ENCODE measurements at regions of chr20 and their contacts with region 1.

Region 1: DNA sequence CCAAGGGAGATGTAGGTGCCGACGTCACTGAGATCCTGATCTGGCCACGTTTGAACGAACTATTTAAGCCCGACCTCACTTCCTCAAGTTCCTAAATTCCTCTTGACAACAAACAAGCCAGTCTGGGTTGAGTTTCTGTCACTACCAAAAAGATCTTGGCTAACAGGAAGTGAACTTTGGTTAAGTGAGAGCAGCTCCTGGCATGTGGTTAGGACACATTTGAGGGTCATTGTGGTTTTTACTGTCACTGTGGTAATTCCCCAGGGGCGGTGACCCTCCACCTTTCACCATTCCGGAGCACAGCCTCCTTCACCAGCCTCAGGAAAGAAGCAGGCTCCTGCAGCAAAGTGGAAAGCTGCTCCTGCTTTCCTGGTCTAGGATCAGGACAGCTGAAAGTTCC is 43.1 kb upstream of the ZNF831 start:
- DNase-seq: peak in 6 of 14 experiments; percentile 23 to 79 (median 50)
- ATAC-seq: no peak
- H3K4me3 ChIP-seq: no peak overlapping the region
- H3K4me3 Mint-ChIP-seq: peak overlapping the region; percentile 72
- H3K27ac ChIP-seq: peak overlapping the region; percentile 77 to 85
- H3K27ac Mint-ChIP-seq: peak overlapping the region; percentile 99
- H3K4me1 ChIP-seq: peaks cover 85% of the 10 kb centered on the region
- H3K4me1 Mint-ChIP-seq: peaks cover 89% of the 10 kb centered on the region
- H3K27me3 ChIP-seq: no peaks in the 10 kb centered on the region
- H3K27me3 Mint-ChIP-seq: no peaks in the 10 kb centered on the region
- CTCF ChIP-seq: no peak

Region 2: DNA sequence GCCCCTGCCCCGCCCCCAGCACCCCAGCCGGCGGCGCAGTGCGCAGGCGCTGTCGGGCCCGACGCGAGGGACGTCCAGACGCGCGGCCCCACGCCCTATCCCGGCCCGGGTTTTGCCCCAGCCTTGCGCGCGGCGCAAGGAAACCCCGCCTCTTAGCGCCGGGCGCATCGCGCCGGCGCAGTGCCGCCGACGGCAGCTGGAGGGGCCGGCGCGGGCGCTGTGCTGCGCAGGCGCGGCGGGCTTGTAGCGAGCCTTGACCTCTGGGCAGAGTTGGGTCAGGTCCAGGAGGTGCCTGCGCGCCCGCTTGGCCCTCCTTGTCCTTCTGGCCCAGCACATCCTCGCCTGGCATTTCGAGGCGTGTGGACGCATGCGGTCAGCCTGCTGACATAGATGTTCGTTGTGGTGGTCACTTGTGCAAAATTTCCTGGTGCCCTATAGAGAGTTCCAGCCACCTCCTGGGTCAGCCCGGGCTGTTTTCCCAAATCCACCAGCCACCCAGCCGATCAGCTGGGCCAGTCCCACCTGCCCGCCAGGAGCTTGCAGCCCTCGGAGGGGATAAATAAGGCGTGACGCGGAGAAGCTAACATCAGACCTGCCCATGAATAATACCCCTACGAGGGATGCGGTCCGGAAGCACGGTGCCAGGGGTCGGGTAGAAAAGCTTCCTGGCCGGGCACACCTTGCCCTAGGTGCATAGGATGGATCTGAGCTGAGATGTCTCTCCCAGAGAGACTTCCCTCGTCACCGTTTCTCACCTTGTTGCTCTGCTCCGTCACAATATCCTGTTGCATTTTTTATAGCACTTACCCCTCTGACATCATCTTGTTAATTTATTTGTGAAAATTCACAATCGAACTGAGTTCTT is 77.5 kb before region 1 on chr20:
- CTCF ChIA-PET with region 1: no interaction called
- POLR2A ChIA-PET with region 1: interaction called, 10 read pairs
- intact Hi-C with region 1: no loop called
- DNase-seq: peak; percentile 87 to 97 (median 94)
- ATAC-seq: peak; percentile 94
- H3K4me3 ChIP-seq: peak overlapping the region; percentile 85
- H3K4me3 Mint-ChIP-seq: peak overlapping the region; percentile 92
- H3K27ac ChIP-seq: peak overlapping the region; percentile 67 to 77
- H3K27ac Mint-ChIP-seq: peak overlapping the region; percentile 91
- H3K4me1 ChIP-seq: peaks cover 41% of the 10 kb centered on the region
- H3K4me1 Mint-ChIP-seq: peaks cover 48% of the 10 kb centered on the region
- H3K27me3 ChIP-seq: no peaks in the 10 kb centered on the region
- H3K27me3 Mint-ChIP-seq: no peaks in the 10 kb centered on the region
- CTCF ChIP-seq: no peak

Region 3: DNA sequence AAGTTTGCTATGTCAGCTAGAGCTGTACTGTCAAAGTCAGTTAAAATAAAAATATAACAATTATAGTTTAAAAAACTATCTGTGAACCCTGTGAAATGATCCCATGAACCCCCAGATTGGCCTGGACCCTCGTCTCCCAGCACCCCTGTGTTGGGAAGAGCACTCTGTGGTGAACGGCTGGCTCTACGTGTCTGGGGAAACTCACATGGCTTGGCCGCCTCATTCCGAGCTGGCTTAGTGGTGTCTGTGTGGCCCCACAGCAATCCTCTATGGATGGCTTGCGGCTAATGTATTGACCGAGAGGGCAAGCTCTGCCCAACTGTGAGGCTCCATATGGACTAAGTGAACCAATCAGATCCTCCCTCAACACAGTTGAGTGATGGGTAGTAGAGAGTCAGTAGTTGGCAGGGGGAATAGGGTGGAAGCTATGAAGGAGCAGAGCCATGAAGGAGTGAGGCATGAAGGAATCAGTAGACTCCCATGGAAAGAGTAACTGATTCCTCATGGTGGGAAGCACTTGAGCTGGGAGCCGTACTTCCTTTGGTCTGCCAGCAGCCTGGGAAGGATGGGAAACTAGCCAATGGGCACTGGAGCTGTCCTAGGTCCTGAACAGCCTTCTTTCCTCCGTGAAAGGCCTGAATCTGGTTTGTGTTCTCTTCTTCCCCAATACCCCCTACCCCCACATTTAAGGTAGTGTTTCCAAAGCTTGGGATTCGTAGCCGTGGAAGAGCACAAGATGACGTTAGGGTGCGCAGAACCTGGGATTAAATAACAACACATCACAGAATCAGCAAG is 21.5 kb after region 1 on chr20:
- CTCF ChIA-PET with region 1: interaction called, 13 read pairs
- POLR2A ChIA-PET with region 1: interaction called, 203 read pairs
- intact Hi-C with region 1: loop called in 1 of 2 experiments (anchors 2 kb)
- DNase-seq: peak in 2 of 14 experiments; percentile 25 to 33
- ATAC-seq: no peak
- H3K4me3 ChIP-seq: no peak overlapping the region
- H3K4me3 Mint-ChIP-seq: peak overlapping the region; percentile 7
- H3K27ac ChIP-seq: no peak overlapping the region
- H3K27ac Mint-ChIP-seq: no peak overlapping the region
- H3K4me1 ChIP-seq: peaks cover 38% of the 10 kb centered on the region
- H3K4me1 Mint-ChIP-seq: peaks cover 58% of the 10 kb centered on the region
- H3K27me3 ChIP-seq: no peaks in the 10 kb centered on the region
- H3K27me3 Mint-ChIP-seq: no peaks in the 10 kb centered on the region
- CTCF ChIP-seq: no peak

Region 4: GRCh38 chr20:59177261-59178250 is 57.1 kb after region 1 on chr20:
- CTCF ChIA-PET with region 1: interaction called, 5 read pairs
- POLR2A ChIA-PET with region 1: interaction called, 30 read pairs
- intact Hi-C with region 1: no loop called
- DNase-seq: peak in 4 of 14 experiments; percentile 43 to 82 (median 60)
- ATAC-seq: peak; percentile 68
- H3K4me3 ChIP-seq: peak overlapping the region; percentile 9
- H3K4me3 Mint-ChIP-seq: peak overlapping the region; percentile 35
- H3K27ac ChIP-seq: peak overlapping the region; percentile 33 to 70
- H3K27ac Mint-ChIP-seq: peak overlapping the region; percentile 82
- H3K4me1 ChIP-seq: peaks cover 73% of the 10 kb centered on the region
- H3K4me1 Mint-ChIP-seq: peaks cover 92% of the 10 kb centered on the region
- H3K27me3 ChIP-seq: no peaks in the 10 kb centered on the region
- H3K27me3 Mint-ChIP-seq: no peaks in the 10 kb centered on the region
- CTCF ChIP-seq: no peak

Region 5: DNA sequence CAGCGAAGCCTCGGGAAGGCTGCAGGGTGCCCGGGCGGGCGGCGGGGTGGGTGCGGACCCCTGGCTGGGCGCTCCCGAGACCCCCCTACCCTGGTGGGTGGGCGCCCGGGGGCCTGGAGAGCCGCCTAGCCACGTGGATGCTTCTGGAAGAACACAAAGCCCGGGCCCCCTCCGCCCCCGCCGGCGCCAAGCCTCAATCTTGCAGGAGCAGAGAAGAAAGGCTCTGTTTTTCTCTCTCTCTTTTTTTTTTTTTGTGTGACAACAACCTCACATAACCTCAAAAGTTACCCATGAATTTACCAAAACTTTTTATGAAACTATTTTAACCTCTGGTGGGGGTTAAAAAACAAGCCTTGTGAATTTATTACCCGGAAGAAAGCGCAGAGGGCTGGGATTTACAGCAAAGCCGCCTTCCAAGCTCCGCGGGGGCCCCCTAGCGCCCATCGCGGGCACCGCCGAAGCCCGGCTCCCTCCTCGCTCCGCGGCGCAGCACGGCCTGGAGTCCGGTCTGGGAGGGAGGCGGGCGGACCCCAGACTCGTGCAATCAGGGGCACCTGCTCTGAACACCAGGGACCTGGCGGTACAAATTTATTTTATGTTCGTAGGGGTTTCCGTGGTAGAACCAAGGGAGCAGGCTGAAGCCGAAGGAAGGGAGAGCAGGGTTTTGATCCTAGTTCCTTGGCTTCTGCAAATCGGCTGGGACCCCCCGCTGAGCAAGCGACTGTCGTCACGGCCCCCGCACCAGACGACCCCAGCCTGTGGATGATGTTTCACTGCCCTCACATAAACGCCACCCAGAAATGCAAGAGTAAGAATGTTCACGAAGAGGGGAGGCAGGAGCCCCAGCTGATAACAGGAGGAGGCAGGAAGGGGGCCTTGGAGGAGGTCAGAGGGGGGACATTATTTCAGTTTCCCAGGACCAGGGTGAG is 102.0 kb after region 1 on chr20:
- CTCF ChIA-PET with region 1: interaction called, 11 read pairs
- POLR2A ChIA-PET with region 1: interaction called, 10 read pairs
- intact Hi-C with region 1: no loop called
- DNase-seq: peak; percentile 72 to 87 (median 78)
- ATAC-seq: peak; percentile 94
- H3K4me3 ChIP-seq: peak overlapping the region; percentile 46
- H3K4me3 Mint-ChIP-seq: peak overlapping the region; percentile 86
- H3K27ac ChIP-seq: no peak overlapping the region
- H3K27ac Mint-ChIP-seq: peak overlapping the region; percentile 87
- H3K4me1 ChIP-seq: peaks cover 16% of the 10 kb centered on the region
- H3K4me1 Mint-ChIP-seq: peaks cover 51% of the 10 kb centered on the region
- H3K27me3 ChIP-seq: no peaks in the 10 kb centered on the region
- H3K27me3 Mint-ChIP-seq: no peaks in the 10 kb centered on the region
- CTCF ChIP-seq: peak; percentile 93

Measured in CD4-positive, alpha-beta T cell (primary cell).